Common myeloid progenitor, CD34-positive (primary cell): ENCODE measurements at regions of chrX and their contacts with region 1.

Region 1: GRCh38 chrX:53678667-53679066 is 7.9 kb downstream of the HUWE1 start:
- DNase-seq: peak; percentile 21 to 55 (median 53)
- H3K4me3 ChIP-seq: no peak overlapping the region
- H3K27ac ChIP-seq: no peak overlapping the region
- H3K4me1 ChIP-seq: peaks cover 0 to 11% (median 3%) of the 10 kb centered on the region in 4 experiments
- H3K27me3 ChIP-seq: no peaks in the 10 kb centered on the region

Region 2: DNA sequence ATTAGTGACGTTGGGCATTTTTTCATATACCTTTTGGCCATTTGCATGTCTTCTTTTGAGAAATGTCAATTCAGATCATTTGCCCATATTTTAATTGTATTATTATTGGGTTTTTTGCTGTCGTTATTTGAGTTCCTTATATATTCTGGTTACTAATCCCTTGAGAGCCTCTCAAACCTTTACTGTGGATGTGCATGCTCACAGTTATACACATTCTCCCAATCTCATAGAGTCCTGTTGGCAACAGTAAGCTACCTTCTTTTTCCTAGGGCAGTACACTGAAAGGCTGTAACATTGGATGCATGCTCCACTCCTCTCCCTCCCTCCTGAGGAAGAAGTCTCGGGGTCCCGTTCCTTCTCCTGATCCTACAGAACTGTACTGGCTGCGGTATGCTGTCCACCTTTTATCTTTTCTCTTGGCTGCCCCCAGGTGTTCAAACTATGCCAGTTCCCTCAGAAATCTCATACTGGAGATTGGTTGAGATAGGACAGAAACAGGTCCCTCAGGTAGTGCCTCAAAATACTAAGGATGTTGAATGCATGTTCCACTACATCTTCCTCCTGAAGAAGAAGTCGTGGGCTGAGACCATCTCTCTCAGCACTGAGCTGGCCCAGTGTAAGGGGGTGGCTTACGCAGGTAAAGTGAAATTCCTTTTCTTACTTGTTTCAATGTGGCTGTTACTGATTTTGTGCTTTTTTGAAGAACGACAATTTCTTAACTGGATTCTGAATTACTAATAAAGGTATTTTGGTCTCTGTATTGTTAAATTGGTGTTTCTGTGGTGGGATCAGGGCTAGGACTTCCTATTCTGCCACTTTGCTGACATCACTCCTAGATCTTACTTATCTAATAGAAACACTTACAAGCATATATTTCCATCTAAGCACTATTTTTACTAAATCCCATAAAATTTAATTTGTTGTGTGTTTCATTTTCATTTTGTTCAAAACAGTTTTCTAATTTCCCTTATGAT is 153.3 kb after region 1 on chrX:
- CTCF ChIA-PET with region 1: interaction called, 19 read pairs
- POLR2A ChIA-PET with region 1: no interaction called
- DNase-seq: peak; percentile 29 to 49 (median 44)
- H3K4me3 ChIP-seq: no peak overlapping the region
- H3K27ac ChIP-seq: no peak overlapping the region
- H3K4me1 ChIP-seq: no peaks in the 10 kb centered on the region
- H3K27me3 ChIP-seq: no peaks in the 10 kb centered on the region